Ovary (tissue), 10 donors: ENCODE measurements at regions of chr3 and their contacts with region 1.

Region 1: GRCh38 chr3:185983495-185984141 is 45.8 kb upstream of the TRA2B start:
- DNase-seq: peak; percentile 50 to 72 (median 64)
- H3K4me3 ChIP-seq: no peak overlapping the region
- H3K27ac ChIP-seq: no peak overlapping the region
- H3K4me1 ChIP-seq: no peaks in the 10 kb centered on the region
- H3K27me3 ChIP-seq: no peaks in the 10 kb centered on the region
- CTCF ChIP-seq: peak; percentile 69 to 75 (median 75)
- EP300 ChIP-seq: no peak
- POLR2A ChIP-seq: no peak

Region 2: DNA sequence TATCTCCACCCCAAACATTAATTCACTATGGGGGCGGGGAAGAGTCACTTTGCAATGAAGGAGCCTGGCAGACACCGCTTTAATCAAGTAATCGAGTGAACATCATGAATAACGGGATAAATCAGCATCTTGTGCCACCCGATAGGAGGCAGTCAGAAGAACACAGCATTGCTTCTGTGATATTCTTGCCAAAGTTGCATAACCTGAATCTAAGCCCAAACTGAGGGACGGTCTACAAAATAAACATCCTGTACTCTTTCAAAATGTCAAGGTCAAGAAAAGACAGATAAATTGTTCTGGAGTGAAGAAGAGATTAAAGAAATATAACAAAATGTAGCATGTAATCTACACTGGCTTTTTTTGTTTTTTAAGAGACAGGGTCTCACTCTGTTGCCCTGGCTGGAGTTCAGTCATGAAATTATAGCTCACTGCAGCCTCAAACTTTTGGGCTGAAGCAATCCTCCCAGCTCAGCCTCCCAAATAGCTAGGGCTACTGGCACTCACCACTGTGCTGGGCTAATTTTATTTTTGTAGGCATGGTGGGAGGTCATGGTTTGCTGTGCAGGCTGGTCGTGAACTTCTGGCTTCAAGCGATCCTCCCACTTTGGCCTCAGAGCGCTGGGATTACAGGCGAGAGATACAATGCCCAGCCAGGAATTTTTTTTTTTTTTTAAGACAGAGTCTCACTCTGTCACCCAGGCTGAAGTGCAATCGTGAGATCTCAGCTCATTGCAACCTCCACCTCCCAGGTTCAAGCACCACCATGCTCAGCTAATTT is 1774.3 kb before region 1 on chr3:
- intact Hi-C with region 1: no loop called
- DNase-seq: peak in 3 of 5 donors; percentile 40 to 54 (median 50)
- H3K4me3 ChIP-seq: no peak overlapping the region
- H3K27ac ChIP-seq: no peak overlapping the region
- H3K4me1 ChIP-seq: peaks cover 6% of the 10 kb centered on the region
- H3K27me3 ChIP-seq: no peaks in the 10 kb centered on the region
- CTCF ChIP-seq: no peak
- EP300 ChIP-seq: no peak
- POLR2A ChIP-seq: no peak

Region 3: GRCh38 chr3:186241910-186242821 is 258.5 kb after region 1 on chr3:
- intact Hi-C with region 1: loop called in 1 of 4 experiments (anchors 10 kb)
- DNase-seq: peak in 2 of 5 donors; percentile 35 to 45
- H3K4me3 ChIP-seq: no peak overlapping the region
- H3K27ac ChIP-seq: no peak overlapping the region
- H3K4me1 ChIP-seq: peaks cover 4% of the 10 kb centered on the region
- H3K27me3 ChIP-seq: no peaks in the 10 kb centered on the region
- CTCF ChIP-seq: no peak
- EP300 ChIP-seq: no peak
- POLR2A ChIP-seq: no peak

Region 4: DNA sequence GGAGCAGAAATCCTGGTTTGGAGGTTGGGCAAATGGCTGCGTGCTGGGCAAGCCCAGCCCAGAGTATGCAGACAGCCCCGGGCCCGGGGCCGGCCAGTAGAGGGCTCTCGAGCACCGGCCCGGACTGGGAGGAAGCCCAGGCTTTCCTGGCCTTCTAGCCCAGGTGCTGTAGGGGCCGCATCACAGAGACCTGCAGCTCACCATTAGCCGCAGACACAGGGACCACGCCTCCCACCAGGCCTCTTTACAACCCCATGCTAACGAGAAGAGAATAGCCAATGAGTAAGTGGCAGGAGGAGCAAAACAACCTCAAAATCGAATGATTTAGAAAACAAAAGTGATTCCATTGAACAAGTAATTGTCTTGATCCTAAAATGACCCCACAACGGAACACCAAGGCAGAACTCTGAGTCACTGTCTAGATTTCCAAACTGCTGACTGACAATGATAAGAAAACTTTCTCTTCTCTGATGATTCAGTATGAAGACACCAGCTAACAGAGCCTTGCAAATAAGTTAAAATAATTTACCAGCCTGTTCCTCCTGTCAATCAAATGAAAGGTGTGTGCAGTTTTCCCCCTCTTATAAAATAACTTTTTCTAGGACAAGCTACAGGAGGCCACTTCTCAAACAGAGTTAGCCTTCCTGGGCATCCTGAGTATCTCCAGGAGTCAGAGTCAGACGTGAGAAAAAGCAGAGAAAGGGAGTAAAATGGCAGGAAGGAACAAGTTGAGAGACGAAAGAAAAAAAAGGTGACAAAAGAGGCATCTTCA is 276.2 kb after region 1 on chr3:
- intact Hi-C with region 1: loop called in 2 of 4 experiments (anchors 10 kb)
- DNase-seq: peak; percentile 39 to 73 (median 51)
- H3K4me3 ChIP-seq: no peak overlapping the region
- H3K27ac ChIP-seq: no peak overlapping the region
- H3K4me1 ChIP-seq: no peaks in the 10 kb centered on the region
- H3K27me3 ChIP-seq: no peaks in the 10 kb centered on the region
- CTCF ChIP-seq: peak in 2 of 3 donors; percentile 22 to 54
- EP300 ChIP-seq: no peak
- POLR2A ChIP-seq: no peak

Region 5: DNA sequence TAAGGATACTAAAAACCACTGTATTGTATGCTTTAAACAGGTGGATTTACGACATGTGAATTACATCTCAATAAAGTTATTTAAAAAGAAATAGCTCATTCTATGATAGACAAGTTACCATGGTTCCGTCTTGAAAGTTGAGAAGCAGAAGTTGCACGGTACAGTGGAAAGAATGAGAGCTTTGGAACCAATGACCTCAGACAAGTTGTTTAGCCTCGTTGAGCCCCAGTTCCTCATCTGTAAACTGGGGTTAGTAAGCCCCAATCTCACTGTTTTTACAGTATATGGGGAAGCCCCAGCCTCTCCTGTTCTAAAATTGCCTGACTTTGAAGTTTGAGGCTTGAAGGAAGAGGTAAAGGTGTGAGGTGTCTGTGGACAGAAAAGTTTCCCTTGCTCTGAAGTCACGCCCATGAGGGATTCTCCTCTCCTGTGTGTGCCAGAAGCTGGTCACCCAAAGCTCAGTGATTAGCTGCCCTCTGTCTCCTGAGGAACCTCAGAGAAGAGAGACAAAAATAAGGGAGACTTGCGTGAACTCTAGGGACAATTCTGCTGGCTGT is 550.6 kb after region 1 on chr3:
- intact Hi-C with region 1: loop called in 1 of 4 experiments (anchors 10 kb)
- DNase-seq: no peak
- H3K4me3 ChIP-seq: no peak overlapping the region
- H3K27ac ChIP-seq: no peak overlapping the region
- H3K4me1 ChIP-seq: no peaks in the 10 kb centered on the region
- H3K27me3 ChIP-seq: no peaks in the 10 kb centered on the region
- CTCF ChIP-seq: no peak
- EP300 ChIP-seq: no peak
- POLR2A ChIP-seq: no peak

Region 6: DNA sequence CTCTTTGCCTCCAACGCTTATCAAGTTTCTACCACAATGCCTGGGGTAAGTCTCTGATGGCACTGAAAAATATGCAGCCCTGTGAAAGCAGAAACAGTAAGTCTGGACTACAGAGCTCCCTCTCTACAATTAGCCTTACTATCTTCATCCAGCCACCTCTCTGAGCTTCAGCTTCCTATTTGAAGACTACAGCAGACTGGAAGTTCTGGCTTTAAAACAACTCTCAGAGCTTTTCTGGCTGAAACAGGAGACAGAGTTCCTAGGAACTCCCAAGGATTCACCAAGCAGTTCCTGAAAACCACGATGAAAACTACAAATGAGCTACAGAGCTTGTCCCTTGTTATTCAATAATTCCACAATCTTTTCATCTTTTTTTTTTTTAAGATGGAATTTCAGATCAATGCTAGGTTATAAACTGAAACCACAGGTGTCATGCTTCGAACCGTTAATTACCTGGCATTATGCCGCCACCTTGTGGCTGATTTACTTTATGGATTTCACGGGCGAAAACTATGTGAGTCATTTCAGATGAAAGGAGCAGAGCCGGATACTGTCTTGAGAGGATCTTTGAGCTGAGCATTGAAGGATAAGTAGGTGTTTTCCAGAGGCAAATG is 556.7 kb after region 1 on chr3:
- intact Hi-C with region 1: loop called (anchors 5 to 10 kb)
- DNase-seq: peak; percentile 61 to 76 (median 67)
- H3K4me3 ChIP-seq: no peak overlapping the region
- H3K27ac ChIP-seq: no peak overlapping the region
- H3K4me1 ChIP-seq: no peaks in the 10 kb centered on the region
- H3K27me3 ChIP-seq: no peaks in the 10 kb centered on the region
- CTCF ChIP-seq: peak; percentile 46 to 74 (median 70)
- EP300 ChIP-seq: no peak
- POLR2A ChIP-seq: no peak